ENCODE measurements at regions of chr12 and their contacts with region 1.

Region 1: GRCh38 chr12:25269701-25270100 is 19.0 kb upstream of the KRAS start:
- DNase-seq: no peak
- ATAC-seq: peak; percentile 96
- H3K4me3 Mint-ChIP-seq: no peak overlapping the region
- H3K27ac Mint-ChIP-seq: peak overlapping the region; percentile 79
- H3K4me1 Mint-ChIP-seq: peaks cover 17% of the 10 kb centered on the region
- H3K27me3 Mint-ChIP-seq: no peaks in the 10 kb centered on the region
- CTCF ChIP-seq: no peak

Region 2: GRCh38 chr12:25320123-25321006 is 50.7 kb after region 1 on chr12:
- CTCF ChIA-PET with region 1: no interaction called
- POLR2A ChIA-PET with region 1: interaction called, 9 read pairs
- intact Hi-C with region 1: loop called (anchors 1 kb)
- DNase-seq: no peak
- ATAC-seq: peak; percentile 71
- H3K4me3 Mint-ChIP-seq: peak overlapping the region; percentile 52
- H3K27ac Mint-ChIP-seq: peak overlapping the region; percentile 83
- H3K4me1 Mint-ChIP-seq: peaks cover 73% of the 10 kb centered on the region
- H3K27me3 Mint-ChIP-seq: no peaks in the 10 kb centered on the region
- CTCF ChIP-seq: no peak

Region 3: DNA sequence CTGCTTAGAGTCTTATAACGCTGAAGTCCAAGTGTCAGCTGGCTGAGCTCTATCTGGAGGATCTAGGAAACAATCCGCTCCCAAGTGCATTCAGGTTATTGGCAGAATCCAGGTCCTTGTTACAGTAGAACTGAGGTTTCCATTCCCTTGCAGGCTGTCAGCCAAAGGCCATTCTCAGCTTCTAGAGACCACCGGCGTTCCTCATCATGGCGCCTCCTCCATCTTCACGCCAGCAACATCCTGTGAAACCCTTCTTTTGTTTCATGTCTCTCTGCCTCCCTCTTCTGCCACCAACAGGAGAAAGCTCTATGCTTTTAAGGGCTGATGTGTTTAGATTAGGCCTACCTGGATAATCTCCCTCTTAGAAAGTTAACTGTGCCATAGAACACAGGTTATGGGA is 555.7 kb after region 1 on chr12:
- CTCF ChIA-PET with region 1: no interaction called
- POLR2A ChIA-PET with region 1: no interaction called
- intact Hi-C with region 1: no loop called
- DNase-seq: no peak
- ATAC-seq: no peak
- H3K4me3 Mint-ChIP-seq: no peak overlapping the region
- H3K27ac Mint-ChIP-seq: no peak overlapping the region
- H3K4me1 Mint-ChIP-seq: no peaks in the 10 kb centered on the region
- H3K27me3 Mint-ChIP-seq: peaks cover 5% of the 10 kb centered on the region
- CTCF ChIP-seq: no peak